Lower leg skin (tissue), 4 donors: ENCODE measurements at regions of chr12 and their contacts with region 1.

Region 1: GRCh38 chr12:28360253-28360652 is 170.0 kb downstream of the CCDC91 start:
- DNase-seq: no peak
- H3K4me3 ChIP-seq: no peak overlapping the region
- CTCF ChIP-seq: no peak
- POLR2A ChIP-seq: no peak

Region 2: GRCh38 chr12:28340261-28340660 is 20.0 kb before region 1 on chr12:
- intact Hi-C with region 1: no loop called
- DNase-seq: no peak
- H3K4me3 ChIP-seq: no peak overlapping the region
- CTCF ChIP-seq: no peak
- POLR2A ChIP-seq: no peak

Region 3: GRCh38 chr12:28446031-28446430 is 85.8 kb after region 1 on chr12:
- intact Hi-C with region 1: loop called (anchors 5 kb)
- DNase-seq: no peak
- H3K4me3 ChIP-seq: no peak overlapping the region
- CTCF ChIP-seq: no peak
- POLR2A ChIP-seq: no peak

Region 4: GRCh38 chr12:28535216-28535615 is 175.0 kb after region 1 on chr12:
- intact Hi-C with region 1: no loop called
- DNase-seq: no peak
- H3K4me3 ChIP-seq: no peak overlapping the region
- CTCF ChIP-seq: no peak
- POLR2A ChIP-seq: no peak